Caco-2 (cell line): ENCODE measurements at regions of chr11 and their contacts with region 1.

Region 1: GRCh38 chr11:93895106-93895862 is 44.9 kb upstream of the VSTM5 start:
- DNase-seq: peak in 1 of 2 experiments; percentile 79
- H3K4me3 ChIP-seq: no peak overlapping the region
- H3K4me3 Mint-ChIP-seq: no peak overlapping the region
- H3K27ac Mint-ChIP-seq: no peak overlapping the region
- H3K4me1 ChIP-seq: no peaks in the 10 kb centered on the region
- H3K4me1 Mint-ChIP-seq: no peaks in the 10 kb centered on the region
- H3K27me3 ChIP-seq: no peaks in the 10 kb centered on the region
- H3K27me3 Mint-ChIP-seq: peaks cover 17% of the 10 kb centered on the region
- CTCF ChIP-seq: peak; percentile 86 to 89

Region 2: DNA sequence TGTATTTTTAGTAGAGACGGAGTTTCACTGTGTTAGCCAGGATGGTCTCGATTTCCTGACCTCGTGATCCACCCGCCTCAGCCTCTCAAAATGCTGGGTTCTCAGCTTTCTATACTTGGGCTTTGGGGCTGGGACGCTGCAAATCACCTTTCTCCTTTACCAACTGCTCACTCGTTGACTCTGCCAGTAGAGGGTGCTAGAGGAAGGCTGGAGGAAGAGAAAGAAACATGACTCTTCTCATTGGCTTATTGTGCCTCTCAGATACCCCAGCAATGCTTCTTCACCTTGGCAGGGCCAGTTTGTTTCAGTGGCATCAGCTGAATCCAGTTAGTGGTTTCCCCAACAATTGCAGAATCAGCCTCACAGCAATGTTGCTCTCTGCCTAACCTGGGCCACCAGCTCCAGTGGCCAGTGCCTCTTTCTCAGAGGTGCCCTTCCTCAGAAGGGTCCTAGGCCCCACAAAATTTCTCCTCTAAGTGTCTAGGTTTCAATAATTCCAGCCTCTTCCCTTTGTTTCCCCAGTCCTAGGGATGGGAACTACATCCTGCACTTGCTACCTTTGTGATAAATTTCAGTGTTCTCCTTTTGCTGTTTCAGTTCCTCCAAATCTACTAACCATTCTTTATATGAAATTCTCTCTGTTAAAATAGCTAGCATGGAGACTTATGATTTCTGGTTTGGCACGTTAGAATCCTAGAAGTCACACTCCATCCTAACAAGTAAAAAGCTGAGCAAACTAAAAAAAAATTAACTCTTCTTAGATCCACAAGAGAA is 26.6 kb after region 1 on chr11:
- CTCF ChIA-PET with region 1: interaction called, 13 read pairs
- POLR2A ChIA-PET with region 1: no interaction called
- intact Hi-C with region 1: no loop called
- DNase-seq: peak; percentile 71 to 77
- H3K4me3 ChIP-seq: no peak overlapping the region
- H3K4me3 Mint-ChIP-seq: no peak overlapping the region
- H3K27ac Mint-ChIP-seq: no peak overlapping the region
- H3K4me1 ChIP-seq: no peaks in the 10 kb centered on the region
- H3K4me1 Mint-ChIP-seq: peaks cover 10% of the 10 kb centered on the region
- H3K27me3 ChIP-seq: no peaks in the 10 kb centered on the region
- H3K27me3 Mint-ChIP-seq: peaks cover 4% of the 10 kb centered on the region
- CTCF ChIP-seq: peak; percentile 85 to 90

Region 3: DNA sequence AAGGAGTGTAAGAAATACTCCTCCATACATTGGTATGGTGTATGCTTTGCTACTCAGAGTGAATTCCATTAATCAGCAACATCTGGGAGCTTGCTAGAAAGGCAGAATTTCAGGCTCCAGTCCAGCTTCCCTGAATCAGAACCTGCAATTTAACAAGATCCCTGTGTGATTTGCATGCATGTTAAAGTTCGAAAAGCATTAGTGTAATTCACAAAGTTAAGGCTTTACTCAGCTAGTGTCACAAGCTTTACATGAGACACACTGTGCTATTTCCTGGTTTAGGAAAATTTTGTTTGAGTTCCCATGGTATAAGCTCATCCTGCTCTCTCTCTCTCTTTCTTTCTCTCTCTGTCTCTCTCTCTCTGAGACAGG is 88.9 kb after region 1 on chr11:
- CTCF ChIA-PET with region 1: no interaction called
- POLR2A ChIA-PET with region 1: no interaction called
- intact Hi-C with region 1: no loop called
- DNase-seq: no peak
- H3K4me3 ChIP-seq: no peak overlapping the region
- H3K4me3 Mint-ChIP-seq: no peak overlapping the region
- H3K27ac Mint-ChIP-seq: no peak overlapping the region
- H3K4me1 ChIP-seq: peaks cover 7% of the 10 kb centered on the region
- H3K4me1 Mint-ChIP-seq: no peaks in the 10 kb centered on the region
- H3K27me3 ChIP-seq: no peaks in the 10 kb centered on the region
- H3K27me3 Mint-ChIP-seq: peaks cover 3% of the 10 kb centered on the region
- CTCF ChIP-seq: no peak

Region 4: DNA sequence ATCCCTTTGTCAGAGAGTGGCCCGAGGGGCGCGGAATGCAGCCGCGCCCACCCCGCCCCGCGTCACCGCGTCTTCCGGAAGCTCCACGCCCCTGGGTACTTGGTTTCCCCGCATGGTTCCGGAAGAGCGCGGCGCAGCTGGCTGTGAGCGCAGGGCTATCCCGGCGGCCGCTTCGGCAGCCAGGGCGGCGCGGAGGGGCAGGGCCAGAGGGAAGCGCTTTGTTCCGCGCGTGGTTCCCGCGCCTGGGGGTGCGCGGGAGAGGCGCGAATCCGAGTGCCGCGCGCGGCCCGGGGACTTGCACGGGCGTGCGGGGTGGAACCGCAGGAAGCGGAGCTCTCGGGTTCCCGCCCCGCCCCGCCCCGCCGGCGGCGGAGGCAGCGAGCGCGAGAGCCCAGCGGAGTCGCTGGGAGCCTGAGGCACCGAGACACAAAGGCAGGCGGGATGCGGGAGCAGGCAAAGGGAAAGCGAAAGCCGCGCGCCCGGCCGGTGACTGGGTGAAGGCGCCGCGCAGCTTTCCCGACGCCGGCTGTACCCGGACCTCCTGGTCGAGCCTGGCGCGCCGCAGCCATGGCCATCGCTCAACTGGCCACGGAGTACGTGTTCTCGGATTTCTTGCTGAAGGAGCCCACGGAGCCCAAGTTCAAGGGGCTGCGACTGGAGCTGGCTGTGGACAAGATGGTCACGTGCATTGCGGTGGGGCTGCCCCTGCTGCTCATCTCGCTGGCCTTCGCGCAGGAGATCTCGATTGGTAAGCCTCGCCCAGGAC is 233.6 kb after region 1 on chr11 and contains the start of gene PANX1:
- CTCF ChIA-PET with region 1: interaction called, 33 read pairs
- POLR2A ChIA-PET with region 1: no interaction called
- intact Hi-C with region 1: no loop called
- DNase-seq: peak; percentile 89 to 93
- H3K4me3 ChIP-seq: peak within 1 kb of the TSS; percentile 70
- H3K4me3 Mint-ChIP-seq: no peak within 1 kb of the TSS
- H3K27ac Mint-ChIP-seq: no peak within 1 kb of the TSS
- H3K4me1 ChIP-seq: peaks cover 18% of the 10 kb centered on the region
- H3K4me1 Mint-ChIP-seq: peaks cover 15% of the 10 kb centered on the region
- H3K27me3 ChIP-seq: no peaks in the 10 kb centered on the region
- H3K27me3 Mint-ChIP-seq: no peaks in the 10 kb centered on the region
- CTCF ChIP-seq: no peak
- total RNA-seq, gene PANX1: 33.1 and 36.6 TPM in 2 replicates

Region 5: DNA sequence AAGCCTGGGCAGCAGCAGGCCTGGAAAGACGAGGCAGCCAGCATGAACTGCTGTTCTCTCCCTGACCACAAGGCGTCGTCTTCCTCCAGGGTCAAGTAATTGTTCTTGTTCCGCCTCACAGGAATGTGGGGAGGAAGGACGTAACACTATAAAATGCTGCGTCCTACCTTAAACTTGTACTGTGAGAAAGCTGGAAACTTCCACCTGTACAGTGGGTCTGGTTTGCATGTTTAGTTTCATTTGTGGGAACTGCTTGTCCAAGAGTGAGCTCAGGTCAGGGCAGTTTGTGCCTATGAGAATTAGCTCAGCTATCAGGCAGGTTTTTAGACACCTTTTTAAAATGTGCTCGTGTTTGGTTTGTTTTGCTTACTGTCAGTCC is 288.6 kb after region 1 on chr11:
- CTCF ChIA-PET with region 1: interaction called, 19 read pairs
- POLR2A ChIA-PET with region 1: no interaction called
- intact Hi-C with region 1: loop called (anchors 1 kb)
- DNase-seq: peak; percentile 81 to 87
- H3K4me3 ChIP-seq: no peak overlapping the region
- H3K4me3 Mint-ChIP-seq: no peak overlapping the region
- H3K27ac Mint-ChIP-seq: no peak overlapping the region
- H3K4me1 ChIP-seq: no peaks in the 10 kb centered on the region
- H3K4me1 Mint-ChIP-seq: peaks cover 11% of the 10 kb centered on the region
- H3K27me3 ChIP-seq: no peaks in the 10 kb centered on the region
- H3K27me3 Mint-ChIP-seq: no peaks in the 10 kb centered on the region
- CTCF ChIP-seq: peak; percentile 96 to 97

Region 6: DNA sequence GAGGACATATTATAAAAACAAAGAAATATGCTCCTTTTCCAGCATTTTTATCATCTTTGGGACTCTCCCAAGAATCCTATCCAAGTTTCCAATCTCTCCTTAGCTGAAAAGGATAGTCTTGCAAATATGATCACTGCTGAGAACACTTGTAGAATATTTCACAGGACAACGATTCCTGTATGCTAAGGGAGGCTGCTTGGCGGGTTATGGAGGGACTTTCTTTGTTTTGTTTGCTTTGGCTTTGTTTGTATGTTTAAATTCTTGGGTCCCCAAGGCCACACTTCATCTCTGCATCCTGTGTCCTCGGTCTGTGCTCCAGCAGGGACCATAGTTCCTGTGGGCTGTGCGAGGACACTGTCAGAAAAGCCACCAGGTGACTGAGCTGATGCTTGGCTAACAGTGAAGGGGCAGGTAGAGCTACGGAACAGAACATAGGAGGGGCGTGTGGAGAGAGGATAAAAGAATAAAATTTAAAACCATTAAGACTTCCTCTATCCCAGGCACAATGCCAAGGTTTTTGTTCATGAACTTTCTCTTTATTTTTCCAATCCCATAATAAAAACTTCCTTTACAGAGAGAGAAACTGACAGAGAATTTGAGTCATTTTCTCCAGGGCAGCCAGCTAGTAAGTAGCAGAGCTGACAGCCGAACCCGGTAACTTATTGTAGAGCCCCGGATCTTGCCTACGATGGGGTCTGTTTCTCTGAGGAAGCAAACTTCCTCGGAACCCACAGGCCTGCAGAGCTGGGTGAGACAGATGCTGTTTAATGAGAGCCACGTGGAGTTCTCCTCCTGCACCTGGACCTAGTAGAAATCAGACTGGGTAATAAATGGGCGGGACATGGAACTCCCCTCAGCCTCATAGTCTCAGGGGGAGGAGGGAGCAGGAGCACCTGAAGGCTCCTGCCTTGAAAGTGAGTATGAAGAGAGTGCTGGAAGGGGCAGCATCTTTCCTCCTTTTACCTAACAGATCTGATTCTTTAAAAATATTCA is 409.0 kb after region 1 on chr11 and contains the start of gene IZUMO1R:
- CTCF ChIA-PET with region 1: no interaction called
- POLR2A ChIA-PET with region 1: no interaction called
- intact Hi-C with region 1: loop called (anchors 5 kb)
- DNase-seq: no peak
- H3K4me3 ChIP-seq: no peak within 1 kb of the TSS
- H3K4me3 Mint-ChIP-seq: no peak within 1 kb of the TSS
- H3K27ac Mint-ChIP-seq: no peak within 1 kb of the TSS
- H3K4me1 ChIP-seq: peaks cover 5% of the 10 kb centered on the region
- H3K4me1 Mint-ChIP-seq: peaks cover 20% of the 10 kb centered on the region
- H3K27me3 ChIP-seq: no peaks in the 10 kb centered on the region
- H3K27me3 Mint-ChIP-seq: no peaks in the 10 kb centered on the region
- CTCF ChIP-seq: no peak
- total RNA-seq, gene IZUMO1R: not detected in 2 replicates

Region 7: DNA sequence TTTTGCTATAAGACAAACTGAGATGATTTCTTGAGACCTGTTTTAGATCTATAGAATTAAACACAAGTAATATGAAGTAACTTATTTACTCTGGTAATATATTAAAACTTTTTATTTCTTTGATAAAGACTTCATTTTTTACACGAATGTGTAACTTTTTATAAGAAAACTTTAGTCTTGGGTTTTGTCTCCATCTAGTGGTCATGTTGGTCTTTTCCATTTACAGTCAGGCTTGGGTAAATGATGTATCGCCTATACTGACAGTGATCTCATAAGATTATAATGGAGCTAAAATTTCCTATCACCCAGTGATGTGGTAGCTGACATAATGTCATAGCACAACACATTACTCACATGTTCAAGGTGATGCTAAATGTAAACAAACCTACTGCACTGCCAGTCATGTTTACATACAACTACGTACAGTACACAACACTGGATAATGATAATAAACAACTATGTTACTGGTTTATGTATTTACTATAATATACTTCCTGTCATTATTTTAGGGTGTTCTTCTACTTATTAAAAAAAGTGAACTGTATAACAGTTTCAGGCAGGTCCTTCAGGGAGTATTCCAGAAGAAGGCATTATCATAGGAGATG is 609.5 kb after region 1 on chr11:
- CTCF ChIA-PET with region 1: interaction called, 15 read pairs
- POLR2A ChIA-PET with region 1: no interaction called
- intact Hi-C with region 1: loop called (anchors 1 kb)
- DNase-seq: peak in 1 of 2 experiments; percentile 62
- H3K4me3 ChIP-seq: no peak overlapping the region
- H3K4me3 Mint-ChIP-seq: no peak overlapping the region
- H3K27ac Mint-ChIP-seq: no peak overlapping the region
- H3K4me1 ChIP-seq: no peaks in the 10 kb centered on the region
- H3K4me1 Mint-ChIP-seq: no peaks in the 10 kb centered on the region
- H3K27me3 ChIP-seq: no peaks in the 10 kb centered on the region
- H3K27me3 Mint-ChIP-seq: peaks cover 5% of the 10 kb centered on the region
- CTCF ChIP-seq: peak; percentile 87 to 88